Activated CD4-positive, alpha-beta memory T cell treated with anti-CD3 and anti-CD28 coated beads, Interleukin-2, amount 10 ng/mL, durations not matched to agents 7 days and 5 days (primary cell): ENCODE measurements at regions of chr14 and their contacts with region 1.

Region 1: DNA sequence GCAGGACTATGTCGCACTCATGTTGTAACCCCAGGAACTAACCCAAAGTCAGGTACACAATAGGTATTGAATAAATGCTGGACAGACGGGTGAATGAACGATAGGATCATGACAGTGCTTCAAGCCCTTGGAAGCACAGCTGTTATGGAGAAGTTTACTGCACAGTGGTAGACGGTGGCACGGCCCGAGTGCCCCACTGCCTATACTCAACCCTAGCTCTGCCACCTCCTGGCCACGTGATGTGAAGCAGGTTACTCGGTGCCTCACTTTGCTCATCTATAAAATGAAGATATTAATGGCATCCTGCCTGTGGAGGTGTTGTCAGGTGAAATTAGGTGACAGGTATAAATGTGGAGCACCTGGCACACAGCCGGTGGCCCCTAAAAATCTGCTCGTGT is 5.8 kb downstream of the ASB2 start:
- DNase-seq: peak; percentile 80
- H3K4me3 Mint-ChIP-seq: peak overlapping the region; percentile 80
- H3K27ac Mint-ChIP-seq: peak overlapping the region; percentile 94
- H3K4me1 Mint-ChIP-seq: peaks cover 89% of the 10 kb centered on the region
- H3K27me3 Mint-ChIP-seq: no peaks in the 10 kb centered on the region

Region 2: GRCh38 chr14:93906341-93907329 is 63.9 kb before region 1 on chr14:
- CTCF ChIA-PET with region 1: no interaction called
- POLR2A ChIA-PET with region 1: no interaction called
- DNase-seq: peak; percentile 77
- H3K4me3 Mint-ChIP-seq: no peak overlapping the region
- H3K27ac Mint-ChIP-seq: no peak overlapping the region
- H3K4me1 Mint-ChIP-seq: peaks cover 3% of the 10 kb centered on the region
- H3K27me3 Mint-ChIP-seq: peaks cover 18% of the 10 kb centered on the region

Region 3: DNA sequence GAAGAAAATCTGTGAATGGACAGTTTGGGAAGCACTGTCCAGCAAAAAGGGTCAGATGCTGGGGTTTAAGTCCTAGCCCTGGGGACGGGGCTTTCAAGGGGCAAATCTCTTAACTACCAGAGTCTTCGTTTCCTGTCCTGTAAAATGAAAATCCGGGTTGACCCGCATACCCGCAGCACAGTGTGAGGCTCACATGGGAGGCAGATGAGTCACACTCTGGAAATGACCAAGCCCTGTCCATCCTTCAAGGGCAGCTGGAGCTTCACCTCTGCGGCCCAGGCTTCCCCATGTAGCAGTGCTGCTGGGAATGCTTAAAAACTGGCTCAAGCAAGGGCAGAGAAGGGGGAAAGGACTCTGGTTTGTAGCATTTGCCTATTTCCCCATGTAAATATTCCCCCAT is 24.4 kb before region 1 on chr14:
- CTCF ChIA-PET with region 1: interaction called, 354 read pairs
- POLR2A ChIA-PET with region 1: interaction called, 79 read pairs
- DNase-seq: no peak
- H3K4me3 Mint-ChIP-seq: no peak overlapping the region
- H3K27ac Mint-ChIP-seq: peak overlapping the region; percentile 40
- H3K4me1 Mint-ChIP-seq: peaks cover 27% of the 10 kb centered on the region
- H3K27me3 Mint-ChIP-seq: no peaks in the 10 kb centered on the region

Region 4: DNA sequence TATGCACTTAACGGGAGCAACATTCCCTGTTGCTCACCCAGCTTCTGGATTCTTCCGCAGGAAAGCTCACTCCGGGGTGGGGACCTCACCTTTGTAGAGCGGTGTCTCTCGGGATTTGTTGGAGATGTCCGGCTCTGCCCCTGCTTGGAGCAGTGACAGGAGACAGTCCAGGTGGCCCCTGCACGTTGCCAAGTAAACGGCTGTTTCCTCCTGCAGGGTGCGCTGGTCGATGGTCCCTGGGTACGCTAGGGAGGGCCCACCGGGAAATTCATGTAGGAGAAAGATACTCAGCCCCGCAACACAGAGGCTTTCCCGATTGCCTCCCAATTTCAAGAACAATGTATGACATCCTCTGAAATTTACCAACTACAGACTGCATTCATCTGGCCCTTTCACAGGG is 17.3 kb before region 1 on chr14:
- CTCF ChIA-PET with region 1: interaction called, 156 read pairs
- POLR2A ChIA-PET with region 1: interaction called, 616 read pairs
- DNase-seq: no peak
- H3K4me3 Mint-ChIP-seq: peak overlapping the region; percentile 91
- H3K27ac Mint-ChIP-seq: peak overlapping the region; percentile 99
- H3K4me1 Mint-ChIP-seq: peaks cover 83% of the 10 kb centered on the region
- H3K27me3 Mint-ChIP-seq: no peaks in the 10 kb centered on the region

Region 5: DNA sequence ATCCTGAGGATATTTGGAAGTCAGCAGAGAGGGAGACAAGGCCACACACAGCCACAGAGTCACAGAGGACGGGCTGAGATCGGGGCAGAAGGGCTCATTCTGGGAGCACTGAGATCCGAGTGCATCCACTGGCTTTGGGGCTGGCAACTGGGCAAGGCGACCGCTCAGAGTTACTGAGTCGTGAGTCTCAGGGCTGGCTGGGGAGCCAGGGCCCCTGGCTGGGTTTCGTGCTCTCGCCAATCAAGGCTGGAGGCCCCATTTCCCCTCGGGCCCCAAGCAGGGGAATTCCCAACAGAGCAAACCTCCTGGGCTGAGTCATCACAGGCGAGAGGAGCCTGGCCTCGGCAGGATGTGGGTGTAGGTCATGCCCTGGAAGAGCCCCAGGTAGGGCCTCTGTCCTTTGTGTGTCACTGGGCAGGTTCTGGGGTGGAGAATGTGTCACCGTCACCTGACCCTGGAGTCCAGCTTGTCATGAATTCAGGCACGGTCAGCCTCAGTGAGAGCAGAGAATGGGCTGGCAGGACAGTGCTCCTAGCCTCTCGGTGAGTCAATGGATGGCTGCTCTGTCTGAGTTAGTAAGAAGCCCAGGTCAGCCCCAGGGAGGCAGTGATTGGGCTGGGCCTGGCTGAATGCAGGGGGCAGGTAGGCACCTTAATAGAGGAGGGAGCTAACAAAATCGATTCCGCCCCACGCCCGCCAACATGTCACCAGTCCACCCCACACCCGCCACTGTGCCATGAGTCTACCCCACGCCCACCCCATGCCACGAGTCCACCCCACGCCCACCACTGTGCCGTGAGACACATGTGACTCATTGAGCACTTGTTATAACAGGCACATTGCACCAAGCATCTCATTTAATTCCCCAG is 11.1 kb before region 1 on chr14:
- CTCF ChIA-PET with region 1: interaction called, 156 read pairs
- POLR2A ChIA-PET with region 1: interaction called, 616 read pairs
- DNase-seq: peak; percentile 96
- H3K4me3 Mint-ChIP-seq: peak overlapping the region; percentile 75
- H3K27ac Mint-ChIP-seq: peak overlapping the region; percentile 99
- H3K4me1 Mint-ChIP-seq: peaks cover 96% of the 10 kb centered on the region
- H3K27me3 Mint-ChIP-seq: no peaks in the 10 kb centered on the region

Region 6: GRCh38 chr14:93984987-93985410 is 14.5 kb after region 1 on chr14:
- CTCF ChIA-PET with region 1: interaction called, 11 read pairs
- POLR2A ChIA-PET with region 1: interaction called, 616 read pairs
- DNase-seq: no peak
- H3K4me3 Mint-ChIP-seq: no peak overlapping the region
- H3K27ac Mint-ChIP-seq: no peak overlapping the region
- H3K4me1 Mint-ChIP-seq: peaks cover 5% of the 10 kb centered on the region
- H3K27me3 Mint-ChIP-seq: no peaks in the 10 kb centered on the region

Region 7: DNA sequence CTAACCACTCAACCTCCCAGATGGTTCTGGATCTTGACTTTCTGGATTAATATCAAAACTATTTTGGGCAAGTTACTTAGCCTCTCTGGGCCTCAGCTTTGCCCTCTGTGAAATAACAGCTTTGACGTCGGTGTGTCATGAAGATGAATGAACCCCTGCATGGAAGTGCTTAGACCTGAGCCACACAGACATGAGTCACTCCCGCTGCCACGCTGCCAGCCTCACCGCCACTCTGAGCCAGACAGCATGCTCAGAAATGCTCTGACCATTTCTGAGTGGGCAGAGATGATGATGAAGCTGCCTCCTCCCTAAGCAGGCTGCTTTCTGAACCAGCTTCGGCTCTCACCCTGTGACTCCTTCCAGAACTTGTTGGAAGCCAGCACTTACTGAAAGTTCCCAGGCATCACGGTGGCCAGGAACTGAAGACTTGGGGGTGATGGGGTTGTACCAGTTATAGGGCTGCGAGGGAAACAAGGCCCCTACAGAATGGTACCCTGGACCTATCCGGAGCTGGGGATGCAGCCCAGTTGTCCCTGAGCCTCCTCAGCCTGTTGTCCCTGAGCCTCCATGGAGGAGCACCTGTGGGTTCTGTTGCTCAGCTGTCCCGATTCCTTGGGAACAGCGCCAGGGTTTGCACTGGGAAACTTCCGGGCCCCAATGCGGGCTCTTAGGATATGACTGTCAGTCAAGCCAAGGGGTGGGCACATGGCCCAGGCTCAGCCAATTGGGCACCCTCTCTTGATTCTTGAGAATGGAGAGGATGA is 24.6 kb after region 1 on chr14:
- CTCF ChIA-PET with region 1: interaction called, 35 read pairs
- POLR2A ChIA-PET with region 1: interaction called, 19 read pairs
- DNase-seq: peak; percentile 56
- H3K4me3 Mint-ChIP-seq: no peak overlapping the region
- H3K27ac Mint-ChIP-seq: no peak overlapping the region
- H3K4me1 Mint-ChIP-seq: peaks cover 35% of the 10 kb centered on the region
- H3K27me3 Mint-ChIP-seq: no peaks in the 10 kb centered on the region

Region 8: GRCh38 chr14:94001501-94002396 is 31.2 kb after region 1 on chr14:
- CTCF ChIA-PET with region 1: interaction called, 35 read pairs
- POLR2A ChIA-PET with region 1: interaction called, 19 read pairs
- DNase-seq: peak; percentile 65
- H3K4me3 Mint-ChIP-seq: no peak overlapping the region
- H3K27ac Mint-ChIP-seq: peak overlapping the region; percentile 21
- H3K4me1 Mint-ChIP-seq: peaks cover 45% of the 10 kb centered on the region
- H3K27me3 Mint-ChIP-seq: peaks cover 6% of the 10 kb centered on the region